Sigmoid colon (tissue), 7 donors: ENCODE measurements at regions of chr2 and their contacts with region 1.

Region 1: GRCh38 chr2:15069149-15069548 is 436.6 kb downstream of the LRATD1 start:
- DNase-seq: peak; percentile 79
- H3K4me3 ChIP-seq: no peak overlapping the region
- H3K27ac ChIP-seq: peak overlapping the region in 3 of 4 donors; percentile 17 to 69 (median 63)
- H3K4me1 ChIP-seq: peaks cover 0 to 18% (median 11%) of the 10 kb centered on the region in 4 donors
- H3K27me3 ChIP-seq: no peaks in the 10 kb centered on the region
- CTCF ChIP-seq: no peak
- EP300 ChIP-seq: peak in 2 of 4 donors; percentile 40 to 42
- POLR2A ChIP-seq: no peak

Region 2: GRCh38 chr2:15042801-15043217 is 26.3 kb before region 1 on chr2:
- intact Hi-C with region 1: loop called (anchors 2 kb)
- DNase-seq: peak; percentile 93
- H3K4me3 ChIP-seq: no peak overlapping the region
- H3K27ac ChIP-seq: peak overlapping the region; percentile 56 to 82 (median 70)
- H3K4me1 ChIP-seq: peaks cover 0 to 31% (median 21%) of the 10 kb centered on the region in 4 donors
- H3K27me3 ChIP-seq: no peaks in the 10 kb centered on the region
- CTCF ChIP-seq: no peak
- EP300 ChIP-seq: peak in 3 of 4 donors; percentile 34 to 66 (median 38)
- POLR2A ChIP-seq: no peak